Activated CD8-positive, alpha-beta memory T cell treated with anti-CD3 and anti-CD28 coated beads, Interleukin-2, amount 10 ng/mL, durations not matched to agents 7 days and 5 days (primary cell): ENCODE measurements at regions of chr4 and their contacts with region 1.

Region 1: DNA sequence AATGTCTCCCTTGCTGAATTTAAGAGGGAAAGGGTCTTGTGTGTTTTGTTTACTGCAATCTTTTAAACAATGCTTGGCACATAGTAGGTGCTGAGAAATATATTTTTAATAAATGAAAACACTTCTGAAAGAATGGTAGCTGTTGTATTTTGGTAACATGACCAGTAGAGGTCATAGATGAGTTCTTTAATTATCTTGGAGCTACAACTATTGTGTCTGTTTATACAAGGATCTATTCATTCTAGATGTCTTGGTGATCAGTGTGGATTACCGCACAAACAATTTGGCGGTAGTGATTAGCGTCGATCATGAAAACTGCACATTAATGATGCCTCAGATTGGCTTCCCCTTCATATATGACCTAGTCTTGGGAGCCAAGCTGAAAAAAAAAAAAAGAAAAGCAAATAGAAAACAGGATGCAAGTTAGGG is 21.4 kb upstream of the SCRG1 start:
- DNase-seq: no peak
- ATAC-seq: no peak
- H3K4me3 Mint-ChIP-seq: no peak overlapping the region
- H3K27ac Mint-ChIP-seq: no peak overlapping the region
- H3K4me1 Mint-ChIP-seq: peaks cover 8% of the 10 kb centered on the region
- H3K27me3 Mint-ChIP-seq: no peaks in the 10 kb centered on the region

Region 2: GRCh38 chr4:173494013-173494970 is 74.0 kb after region 1 on chr4:
- CTCF ChIA-PET with region 1: interaction called, 62 read pairs
- DNase-seq: peak; percentile 75
- ATAC-seq: peak; percentile 99
- H3K4me3 Mint-ChIP-seq: peak overlapping the region; percentile 73
- H3K27ac Mint-ChIP-seq: no peak overlapping the region
- H3K4me1 Mint-ChIP-seq: peaks cover 15% of the 10 kb centered on the region
- H3K27me3 Mint-ChIP-seq: peaks cover 33% of the 10 kb centered on the region